Endothelial cell of umbilical vein (primary cell): ENCODE measurements at regions of chr2 and their contacts with region 1.

Region 1: GRCh38 chr2:28566521-28567041 is 70.7 kb downstream of the PLB1 start:
- DNase-seq: peak; percentile 85
- H3K4me3 ChIP-seq: peak overlapping the region; percentile 42 to 71 (median 58)
- H3K27ac ChIP-seq: no peak overlapping the region
- H3K4me1 ChIP-seq: peaks cover 2% of the 10 kb centered on the region
- H3K27me3 ChIP-seq: no peaks in the 10 kb centered on the region
- CTCF ChIP-seq: peak; percentile 98 to 100
- POLR2A ChIP-seq: no peak

Region 2: GRCh38 chr2:27703638-27704341 is 862.8 kb before region 1 on chr2:
- CTCF ChIA-PET with region 1: interaction called, 9 read pairs
- POLR2A ChIA-PET with region 1: no interaction called
- dilution Hi-C with region 1: no loop called
- intact Hi-C with region 1: loop called (anchors 1 kb)
- DNase-seq: peak; percentile 90
- H3K4me3 ChIP-seq: no peak overlapping the region
- H3K27ac ChIP-seq: no peak overlapping the region
- H3K4me1 ChIP-seq: peaks cover 17% of the 10 kb centered on the region
- H3K27me3 ChIP-seq: no peaks in the 10 kb centered on the region
- CTCF ChIP-seq: peak; percentile 82 to 88
- POLR2A ChIP-seq: no peak

Region 3: DNA sequence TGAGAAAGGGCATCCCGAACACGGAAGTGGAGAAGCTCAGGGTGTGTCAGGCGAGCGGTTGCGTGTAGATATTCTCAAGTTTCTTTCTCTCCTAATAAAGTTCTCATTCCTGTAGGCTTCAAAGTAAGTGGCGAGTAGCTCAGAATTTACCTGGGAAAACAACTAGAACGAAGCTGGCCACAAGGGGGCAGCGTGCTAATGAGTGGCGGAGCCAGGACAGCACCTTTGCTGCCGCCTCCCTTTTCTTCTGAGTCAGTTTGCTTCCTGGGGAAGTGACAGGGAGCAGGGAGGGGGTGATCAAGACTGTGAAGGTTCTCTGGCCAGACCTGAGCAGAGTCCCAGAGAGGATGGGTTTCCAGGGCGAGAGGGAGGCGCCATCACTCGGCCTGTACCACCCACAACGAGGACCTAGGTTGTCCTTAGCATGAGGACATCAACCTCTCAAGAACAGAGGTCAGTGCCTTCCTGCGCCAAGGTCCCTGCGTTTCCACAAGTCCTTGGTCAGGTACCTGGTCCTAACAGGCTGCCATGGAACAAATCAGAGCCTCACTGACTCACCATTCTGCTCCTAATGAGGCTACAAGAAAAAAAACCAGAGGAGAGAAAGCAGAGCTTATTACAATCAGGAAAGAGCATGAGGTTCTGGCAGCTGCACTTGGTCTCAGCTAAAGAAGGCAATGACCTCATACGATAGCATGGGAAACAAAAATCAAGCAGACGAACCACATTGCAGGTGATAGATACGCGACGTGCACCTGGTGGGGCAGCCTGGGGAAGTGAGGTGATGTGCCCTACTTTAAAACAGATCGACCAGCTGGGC is 27.9 kb after region 1 on chr2:
- CTCF ChIA-PET with region 1: interaction called, 96 read pairs
- POLR2A ChIA-PET with region 1: no interaction called
- dilution Hi-C with region 1: no loop called
- intact Hi-C with region 1: loop called (anchors 1 kb)
- DNase-seq: peak; percentile 92
- H3K4me3 ChIP-seq: no peak overlapping the region
- H3K27ac ChIP-seq: peak overlapping the region; percentile 71
- H3K4me1 ChIP-seq: peaks cover 13% of the 10 kb centered on the region
- H3K27me3 ChIP-seq: no peaks in the 10 kb centered on the region
- CTCF ChIP-seq: peak; percentile 71 to 79
- POLR2A ChIP-seq: peak; percentile 41

Region 4: GRCh38 chr2:28661589-28662001 is 95.0 kb after region 1 on chr2:
- CTCF ChIA-PET with region 1: interaction called, 16 read pairs
- POLR2A ChIA-PET with region 1: no interaction called
- dilution Hi-C with region 1: no loop called
- intact Hi-C with region 1: no loop called
- DNase-seq: peak; percentile 90
- H3K4me3 ChIP-seq: no peak overlapping the region
- H3K27ac ChIP-seq: peak overlapping the region; percentile 69
- H3K4me1 ChIP-seq: peaks cover 42% of the 10 kb centered on the region
- H3K27me3 ChIP-seq: no peaks in the 10 kb centered on the region
- CTCF ChIP-seq: no peak
- POLR2A ChIP-seq: no peak

Region 5: DNA sequence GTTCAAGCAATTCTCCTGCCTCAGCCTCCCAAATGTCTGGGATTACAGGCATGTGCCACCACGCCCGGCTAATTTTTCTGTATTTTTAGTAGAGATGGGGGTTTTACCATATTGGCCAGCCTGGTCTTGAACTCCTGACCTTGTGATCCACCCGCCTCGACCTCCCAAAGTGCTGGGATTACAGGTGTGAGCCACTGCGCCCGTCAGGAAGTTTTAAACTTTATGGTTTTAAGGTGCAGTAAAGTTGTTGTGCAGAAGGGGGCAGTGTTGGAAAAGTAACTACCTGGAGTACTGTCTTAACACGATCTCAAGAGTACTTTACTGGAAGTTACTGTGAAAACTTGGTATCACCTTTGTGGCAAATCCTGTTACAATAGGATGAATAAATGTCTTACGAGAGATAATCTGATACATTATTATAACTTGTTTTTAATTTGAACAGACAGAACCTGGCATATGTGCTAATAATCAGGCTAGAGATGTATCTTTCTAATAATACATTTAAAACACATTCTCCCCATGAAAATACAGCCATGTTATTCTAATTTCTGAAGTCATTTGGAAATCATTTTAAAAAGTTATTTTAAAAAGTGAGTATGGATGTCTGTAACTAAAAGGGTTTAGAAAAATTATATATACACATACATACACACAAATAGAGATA is 254.8 kb after region 1 on chr2:
- CTCF ChIA-PET with region 1: interaction called, 8 read pairs
- POLR2A ChIA-PET with region 1: no interaction called
- dilution Hi-C with region 1: no loop called
- intact Hi-C with region 1: loop called (anchors 2 kb)
- DNase-seq: peak; percentile 81
- H3K4me3 ChIP-seq: no peak overlapping the region
- H3K27ac ChIP-seq: no peak overlapping the region
- H3K4me1 ChIP-seq: no peaks in the 10 kb centered on the region
- H3K27me3 ChIP-seq: no peaks in the 10 kb centered on the region
- CTCF ChIP-seq: peak; percentile 45 to 56
- POLR2A ChIP-seq: no peak

Region 6: DNA sequence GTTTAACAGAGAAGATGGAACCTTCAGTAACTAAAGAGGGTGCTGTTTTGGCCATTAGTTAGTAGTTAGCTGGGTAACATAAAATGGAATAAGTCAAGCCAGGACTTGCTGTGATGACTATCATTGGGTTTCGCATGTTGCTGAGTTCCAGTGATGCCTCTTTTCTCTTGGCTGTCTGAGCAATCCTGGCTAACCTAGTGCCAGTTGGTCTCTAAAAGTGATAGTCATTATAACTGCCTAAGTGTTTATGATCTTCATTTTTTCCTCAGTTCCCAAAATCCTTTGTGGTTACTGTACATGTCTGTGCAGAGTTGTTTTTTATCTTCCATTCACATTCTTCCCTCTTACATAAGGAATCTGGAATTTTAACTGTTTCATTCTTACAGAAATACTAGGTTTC is 361.3 kb after region 1 on chr2:
- CTCF ChIA-PET with region 1: interaction called, 3 read pairs
- POLR2A ChIA-PET with region 1: no interaction called
- dilution Hi-C with region 1: no loop called
- intact Hi-C with region 1: loop called (anchors 5 kb)
- DNase-seq: no peak
- H3K4me3 ChIP-seq: no peak overlapping the region
- H3K27ac ChIP-seq: peak overlapping the region; percentile 61
- H3K4me1 ChIP-seq: peaks cover 9% of the 10 kb centered on the region
- H3K27me3 ChIP-seq: no peaks in the 10 kb centered on the region
- CTCF ChIP-seq: no peak
- POLR2A ChIP-seq: no peak